IMR-90 (cell line): ENCODE measurements at regions of chr15 and their contacts with region 1.

Region 1: DNA sequence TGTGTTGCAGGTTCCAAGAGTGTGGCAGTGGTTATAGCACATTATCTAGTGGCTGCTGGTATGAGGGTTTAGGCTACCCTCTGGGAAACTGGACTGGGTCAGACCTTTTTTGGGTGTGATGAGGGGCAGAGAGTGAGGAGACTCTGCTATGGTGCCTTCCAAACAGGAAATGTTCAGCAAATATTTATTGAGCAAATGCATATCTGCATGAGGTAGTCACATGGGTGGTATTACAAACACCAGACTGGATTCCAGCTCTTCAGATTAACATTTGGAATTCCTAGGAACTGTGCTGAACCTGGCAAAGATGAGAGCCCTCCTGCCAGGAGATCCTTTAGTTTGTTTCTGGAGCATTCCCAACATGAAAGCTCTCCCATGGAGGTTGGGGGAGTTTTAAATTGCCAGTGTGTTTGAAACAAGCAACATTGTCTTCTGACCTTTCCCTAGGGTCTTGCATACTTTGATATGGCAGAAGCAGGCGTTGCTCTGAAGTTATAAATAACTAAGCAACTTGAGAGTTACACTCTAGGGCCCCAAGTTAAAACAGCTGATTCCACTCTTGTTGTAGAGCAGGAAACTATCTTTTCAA is 341.2 kb upstream of the C2CD4B start:
- DNase-seq: peak; percentile 70
- ATAC-seq: peak; percentile 90
- H3K4me3 ChIP-seq: no peak overlapping the region
- H3K27ac ChIP-seq: peak overlapping the region; percentile 81
- H3K4me1 ChIP-seq: peaks cover 24% of the 10 kb centered on the region
- H3K27me3 ChIP-seq: no peaks in the 10 kb centered on the region
- CTCF ChIP-seq: no peak
- POLR2A ChIP-seq: no peak
- RAD21 ChIP-seq: no peak

Region 2: DNA sequence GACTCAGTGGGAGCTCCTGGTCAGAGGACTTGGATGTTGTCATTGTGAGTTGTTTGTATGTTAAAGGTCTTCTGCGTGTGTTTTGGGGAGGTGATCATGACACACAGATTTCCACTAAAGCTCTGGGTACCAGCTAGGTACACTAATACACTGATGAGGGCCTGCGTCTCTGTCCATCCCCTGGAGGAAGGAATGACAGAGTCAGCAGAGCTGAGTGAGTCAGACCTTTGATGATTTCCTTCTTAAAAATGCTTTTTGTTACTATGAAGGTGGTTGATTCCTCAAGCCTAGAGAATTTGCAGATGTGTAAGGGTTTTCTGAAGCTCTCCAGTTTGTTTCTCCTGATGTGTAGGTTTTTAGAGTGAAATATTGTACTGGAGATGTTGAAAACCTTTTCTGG is 112.1 kb after region 1 on chr15:
- CTCF ChIA-PET with region 1: no interaction called
- POLR2A ChIA-PET with region 1: interaction called, 13 read pairs
- dilution Hi-C with region 1: no loop called
- in situ Hi-C with region 1: no loop called
- intact Hi-C with region 1: no loop called
- DNase-seq: peak; percentile 94
- ATAC-seq: peak; percentile 91
- H3K4me3 ChIP-seq: no peak overlapping the region
- H3K27ac ChIP-seq: no peak overlapping the region
- H3K4me1 ChIP-seq: peaks cover 17% of the 10 kb centered on the region
- H3K27me3 ChIP-seq: no peaks in the 10 kb centered on the region
- CTCF ChIP-seq: peak; percentile 65
- POLR2A ChIP-seq: no peak
- RAD21 ChIP-seq: peak; percentile 59